Dorsolateral prefrontal cortex (tissue), 120 donors: ENCODE measurements at regions of chr22 and their contacts with region 1.

Region 1: DNA sequence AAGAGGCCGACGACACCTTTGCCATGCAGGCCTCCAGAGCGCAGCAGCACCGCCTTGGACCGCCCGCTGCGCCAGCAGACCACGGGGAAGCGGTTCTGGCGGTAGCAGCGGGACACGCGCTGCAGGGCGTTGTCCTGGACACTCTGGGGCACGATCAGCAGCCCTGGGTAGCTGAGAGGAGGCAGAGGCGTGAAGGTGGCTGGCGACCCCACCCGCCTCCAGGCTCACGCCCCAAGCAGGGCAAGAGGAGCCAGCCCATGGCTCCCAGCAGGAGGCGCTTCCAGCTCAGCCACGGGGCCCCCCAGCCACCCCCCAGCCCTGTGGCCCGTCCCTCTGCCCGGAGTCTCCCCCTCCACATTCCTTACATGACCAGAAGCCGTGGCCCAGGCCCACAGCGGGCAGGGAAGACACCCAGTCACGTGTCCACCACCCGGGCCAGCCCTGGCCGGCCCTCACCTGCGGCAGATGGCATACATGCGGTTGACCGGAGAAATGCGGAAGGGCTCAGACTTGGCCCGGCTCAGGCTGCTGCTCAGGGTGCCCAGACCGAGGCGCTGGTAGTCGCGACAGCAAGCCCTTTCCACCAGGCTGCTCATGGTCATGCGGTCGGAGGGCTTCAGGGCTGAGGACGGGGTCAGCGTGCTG is 15.2 kb downstream of the SBF1 start:
- DNase-seq: peak in 1 of 10 donors; percentile 94
- H3K4me3 ChIP-seq: no peak overlapping the region
- H3K27ac ChIP-seq: peak overlapping the region in 1 of 59 donors; percentile 85
- H3K27me3 ChIP-seq: no peaks in the 10 kb centered on the region
- CTCF ChIP-seq: no peak

Region 2: DNA sequence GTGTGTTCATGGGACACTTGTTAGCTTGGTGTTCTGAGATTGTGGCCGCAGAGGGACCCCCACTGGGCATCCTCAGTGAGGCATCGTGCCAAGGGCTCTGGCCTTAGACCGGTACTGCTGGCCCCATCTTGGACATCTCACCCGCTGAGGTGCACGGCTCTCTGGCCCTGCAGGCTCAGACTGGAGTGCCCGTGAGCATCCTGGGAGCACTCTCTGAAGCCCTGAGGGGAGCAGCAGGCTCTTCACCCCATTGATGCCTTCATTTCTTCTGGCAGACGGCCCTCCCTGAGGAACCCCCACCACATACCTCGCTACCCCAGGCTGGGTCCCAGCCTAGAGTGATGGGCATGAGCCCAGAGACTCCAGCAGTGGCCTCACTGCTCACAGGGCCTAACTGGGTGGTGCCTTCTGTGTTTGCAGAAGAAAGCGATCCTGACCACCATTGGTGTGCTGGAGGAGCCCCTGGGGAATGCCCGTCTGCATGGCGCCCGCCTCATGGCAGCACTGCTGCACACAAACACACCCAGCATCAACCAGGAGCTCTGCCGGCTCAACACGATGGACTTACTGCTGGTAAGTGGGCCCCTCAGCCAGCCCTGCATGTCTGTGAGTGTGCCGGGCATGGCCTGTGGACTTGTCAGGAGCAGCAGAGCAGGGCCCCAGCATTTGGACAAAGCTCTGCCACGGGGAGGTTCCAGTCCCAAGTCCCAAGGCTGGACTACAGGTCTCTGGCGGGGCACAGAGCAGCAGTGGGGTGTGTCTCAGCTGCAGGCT is 36.4 kb before region 1 on chr22:
- intact Hi-C with region 1: loop called in 1 of 2 experiments (anchors 5 kb)
- DNase-seq: no peak
- H3K4me3 ChIP-seq: no peak overlapping the region
- H3K27ac ChIP-seq: peak overlapping the region in 10 of 59 donors; percentile 57 to 89 (median 79)
- H3K27me3 ChIP-seq: no peaks in the 10 kb centered on the region
- CTCF ChIP-seq: no peak